ENCODE measurements at regions of chr1 and their contacts with region 1.

Region 1: DNA sequence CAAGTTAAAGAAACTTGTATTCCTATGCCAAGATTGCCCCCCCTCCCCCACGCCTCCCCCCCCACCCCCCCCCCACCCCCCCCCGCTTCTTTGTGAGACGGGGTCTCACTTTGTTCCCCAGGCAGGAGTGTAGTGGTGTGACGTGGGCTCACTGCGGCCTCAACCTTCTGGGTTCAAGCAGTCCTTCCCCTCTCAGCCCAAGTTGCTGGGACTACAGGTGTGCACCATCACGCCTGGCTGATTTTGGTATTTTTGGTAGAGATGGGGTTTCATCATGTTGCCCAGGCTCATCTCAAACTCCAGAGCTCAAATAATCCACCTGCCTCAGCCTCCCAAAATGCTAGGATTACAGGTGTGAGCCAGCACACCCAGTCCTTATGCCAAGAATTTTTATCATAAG is 136.6 kb downstream of the POU2F1 start:
- DNase-seq: no peak
- ATAC-seq: no peak
- H3K4me3 Mint-ChIP-seq: no peak overlapping the region
- H3K27ac Mint-ChIP-seq: no peak overlapping the region
- H3K4me1 Mint-ChIP-seq: peaks cover 31% of the 10 kb centered on the region
- H3K27me3 Mint-ChIP-seq: no peaks in the 10 kb centered on the region
- CTCF ChIP-seq: no peak

Region 2: DNA sequence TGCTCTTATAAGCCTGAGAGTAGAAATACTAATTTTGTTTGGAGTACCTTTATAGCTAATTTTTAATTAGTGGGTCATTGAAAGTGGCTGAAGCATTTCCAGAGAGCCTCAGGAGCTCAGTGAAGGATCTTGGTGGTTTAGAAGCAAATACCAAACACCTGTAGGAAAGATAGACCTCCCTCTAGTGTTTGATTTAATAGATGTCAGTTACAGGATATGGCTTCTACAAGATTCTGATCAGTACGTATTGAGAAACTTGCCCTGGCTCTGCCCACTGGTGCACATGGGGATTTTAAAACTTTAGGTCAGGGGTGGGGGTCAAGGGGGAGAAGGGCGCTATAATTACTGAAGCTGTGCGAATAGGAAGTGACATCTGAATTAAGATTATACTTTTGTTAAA is 14.5 kb before region 1 on chr1:
- CTCF ChIA-PET with region 1: interaction called, 14 read pairs
- POLR2A ChIA-PET with region 1: interaction called, 3 read pairs
- DNase-seq: no peak
- ATAC-seq: peak; percentile 77
- H3K4me3 Mint-ChIP-seq: no peak overlapping the region
- H3K27ac Mint-ChIP-seq: no peak overlapping the region
- H3K4me1 Mint-ChIP-seq: peaks cover 27% of the 10 kb centered on the region
- H3K27me3 Mint-ChIP-seq: no peaks in the 10 kb centered on the region
- CTCF ChIP-seq: no peak

Region 3: GRCh38 chr1:167430134-167430856 is 73.0 kb after region 1 on chr1:
- CTCF ChIA-PET with region 1: no interaction called
- POLR2A ChIA-PET with region 1: no interaction called
- DNase-seq: peak; percentile 62
- ATAC-seq: peak; percentile 65
- H3K4me3 Mint-ChIP-seq: peak overlapping the region; percentile 34
- H3K27ac Mint-ChIP-seq: peak overlapping the region; percentile 55
- H3K4me1 Mint-ChIP-seq: peaks cover 70% of the 10 kb centered on the region
- H3K27me3 Mint-ChIP-seq: peaks cover 3% of the 10 kb centered on the region
- CTCF ChIP-seq: no peak

Measured in WTC11 (cell line).